ENCODE measurements at regions of chr21 and their contacts with region 1.

Region 1: GRCh38 chr21:42280356-42281180 is 34.6 kb downstream of the TFF3 start:
- DNase-seq: no peak
- ATAC-seq: no peak
- H3K4me3 ChIP-seq: no peak overlapping the region
- H3K27ac ChIP-seq: no peak overlapping the region
- H3K4me1 ChIP-seq: peaks cover 2% of the 10 kb centered on the region
- H3K27me3 ChIP-seq: no peaks in the 10 kb centered on the region
- CTCF ChIP-seq: no peak
- EP300 ChIP-seq: no peak
- POLR2A ChIP-seq: no peak
- RAD21 ChIP-seq: no peak

Region 2: DNA sequence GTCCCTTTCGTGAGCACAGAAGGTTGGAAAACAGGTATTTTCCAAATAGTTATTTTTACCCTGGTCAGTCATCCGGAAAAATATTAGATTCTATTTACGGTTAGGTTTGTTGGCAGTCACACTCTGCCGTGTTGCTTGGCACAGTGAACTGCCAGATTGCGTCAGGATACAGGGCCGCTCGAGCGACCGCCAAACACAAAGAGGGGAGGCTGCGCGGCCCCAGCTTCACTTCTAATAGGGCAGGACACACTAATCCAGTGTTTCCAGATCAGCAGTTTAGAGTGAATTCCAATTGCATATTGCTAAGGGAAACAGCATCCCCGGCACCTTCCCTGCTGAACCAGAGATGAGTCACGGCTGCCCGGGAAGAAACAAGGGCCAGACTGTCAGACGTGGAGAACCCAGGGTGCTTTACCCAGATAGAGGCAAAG is 186.6 kb before region 1 on chr21:
- CTCF ChIA-PET with region 1: no interaction called
- POLR2A ChIA-PET with region 1: no interaction called
- RAD21 ChIA-PET with region 1: no interaction called
- SMC1A ChIA-PET with region 1: no interaction called
- in situ Hi-C with region 1: no loop called
- intact Hi-C with region 1: no loop called
- DNase-seq: no peak
- ATAC-seq: no peak
- H3K4me3 ChIP-seq: no peak overlapping the region
- H3K27ac ChIP-seq: no peak overlapping the region
- H3K4me1 ChIP-seq: no peaks in the 10 kb centered on the region
- H3K27me3 ChIP-seq: no peaks in the 10 kb centered on the region; a peak in 2 of 4 replicates
- CTCF ChIP-seq: no peak
- EP300 ChIP-seq: no peak
- POLR2A ChIP-seq: no peak
- RAD21 ChIP-seq: no peak

Region 3: DNA sequence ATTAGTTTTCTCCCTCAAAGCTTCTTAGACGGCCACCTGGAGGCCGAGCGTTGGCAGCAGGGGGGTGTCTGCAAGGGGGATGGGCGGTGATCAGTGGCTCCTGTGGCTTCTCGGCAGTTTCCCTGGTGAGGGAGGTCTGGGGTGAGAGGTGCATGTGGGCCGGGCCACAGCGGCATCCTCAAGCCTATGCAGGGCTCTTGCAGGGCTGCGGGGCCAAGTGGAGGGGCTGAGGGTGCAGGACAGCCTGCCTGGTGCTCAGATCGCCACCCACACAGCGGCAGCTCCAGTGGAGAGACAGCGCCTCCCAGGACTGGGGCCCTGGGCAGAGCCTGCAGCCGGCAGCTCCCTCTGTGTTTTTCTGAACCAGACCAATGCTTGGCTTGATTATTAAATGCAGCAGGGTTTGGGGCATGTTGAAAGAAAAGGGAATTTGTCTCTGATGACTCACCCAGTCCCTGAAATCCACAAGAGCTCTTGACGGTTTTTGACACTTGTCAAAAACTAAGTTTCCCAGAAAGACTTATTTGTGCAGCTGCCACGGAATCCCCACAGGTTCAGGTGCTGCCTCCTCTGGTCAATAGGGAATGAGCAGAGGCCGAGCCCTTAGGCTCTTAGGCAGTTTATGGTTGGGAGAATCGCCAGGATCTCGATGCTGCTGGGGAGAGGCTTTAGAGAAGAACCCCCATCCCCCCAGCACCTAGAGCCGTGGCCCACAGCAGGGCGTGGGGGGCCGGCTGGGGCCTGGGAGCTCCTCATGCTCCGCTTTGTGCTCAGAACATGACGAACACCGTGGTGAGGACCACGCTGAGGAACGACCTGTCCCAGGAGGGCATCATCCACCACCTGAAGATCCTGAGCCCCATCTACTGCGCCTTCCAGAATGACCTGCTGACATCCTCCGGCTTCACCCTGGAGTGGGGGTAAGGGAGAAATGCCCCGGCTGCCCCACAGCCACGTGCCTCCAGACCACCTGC is 154.7 kb before region 1 on chr21:
- CTCF ChIA-PET with region 1: no interaction called
- POLR2A ChIA-PET with region 1: no interaction called
- RAD21 ChIA-PET with region 1: no interaction called
- SMC1A ChIA-PET with region 1: no interaction called
- in situ Hi-C with region 1: no loop called
- intact Hi-C with region 1: no loop called
- DNase-seq: no peak
- ATAC-seq: peak; percentile 45
- H3K4me3 ChIP-seq: no peak overlapping the region
- H3K27ac ChIP-seq: no peak overlapping the region
- H3K4me1 ChIP-seq: peaks cover 15% of the 10 kb centered on the region
- H3K27me3 ChIP-seq: no peaks in the 10 kb centered on the region
- CTCF ChIP-seq: no peak
- EP300 ChIP-seq: no peak
- POLR2A ChIP-seq: no peak
- RAD21 ChIP-seq: no peak

Region 4: GRCh38 chr21:42263591-42264131 is 16.9 kb before region 1 on chr21:
- CTCF ChIA-PET with region 1: interaction called, 25 read pairs
- POLR2A ChIA-PET with region 1: interaction called, 4 read pairs
- RAD21 ChIA-PET with region 1: interaction called, 25 read pairs
- SMC1A ChIA-PET with region 1: interaction called, 21 read pairs
- in situ Hi-C with region 1: no loop called
- intact Hi-C with region 1: loop called (anchors 2 kb)
- DNase-seq: no peak
- ATAC-seq: no peak
- H3K4me3 ChIP-seq: no peak overlapping the region
- H3K27ac ChIP-seq: no peak overlapping the region
- H3K4me1 ChIP-seq: no peaks in the 10 kb centered on the region
- H3K27me3 ChIP-seq: no peaks in the 10 kb centered on the region; a peak in 1 of 4 replicates
- CTCF ChIP-seq: no peak
- EP300 ChIP-seq: no peak
- POLR2A ChIP-seq: no peak
- RAD21 ChIP-seq: no peak

Region 5: DNA sequence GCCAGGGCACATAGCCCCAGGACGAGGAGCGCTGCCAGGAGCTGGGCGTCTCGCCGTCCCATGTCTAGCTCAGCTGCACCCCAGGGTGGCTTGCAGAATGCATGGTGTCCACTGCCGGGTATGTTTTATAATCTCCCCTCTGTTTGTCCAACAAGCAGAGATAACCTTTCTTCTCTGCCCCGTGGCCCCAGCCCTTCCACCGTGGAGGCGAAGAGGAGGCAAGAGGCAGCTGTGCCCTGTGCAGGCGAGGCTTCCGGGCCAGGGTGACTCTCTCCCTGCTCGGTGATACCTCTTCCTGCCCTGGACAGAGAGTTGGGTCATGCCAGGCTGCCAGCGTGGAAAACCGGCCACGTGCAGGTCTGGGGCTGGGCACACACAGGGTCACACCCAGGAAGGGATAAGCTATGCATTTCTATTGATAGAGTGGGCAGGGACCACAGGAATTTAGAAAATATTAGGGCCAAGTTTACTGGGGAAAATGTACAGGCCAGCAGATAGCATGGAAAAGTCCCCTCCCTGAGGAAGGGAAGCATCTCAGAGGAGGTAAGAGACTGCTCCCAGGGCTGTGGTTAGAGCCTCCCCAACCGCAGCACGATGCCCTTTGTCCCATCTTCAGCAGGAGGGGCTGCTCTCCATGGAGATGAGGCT is 70.5 kb after region 1 on chr21 and contains the start of gene TFF2:
- CTCF ChIA-PET with region 1: no interaction called
- POLR2A ChIA-PET with region 1: no interaction called
- RAD21 ChIA-PET with region 1: no interaction called
- SMC1A ChIA-PET with region 1: no interaction called
- in situ Hi-C with region 1: no loop called
- intact Hi-C with region 1: no loop called
- DNase-seq: no peak
- ATAC-seq: no peak
- H3K4me3 ChIP-seq: no peak within 1 kb of the TSS
- H3K27ac ChIP-seq: no peak within 1 kb of the TSS
- H3K4me1 ChIP-seq: no peaks in the 10 kb centered on the region
- H3K27me3 ChIP-seq: no peaks in the 10 kb centered on the region
- CTCF ChIP-seq: no peak
- EP300 ChIP-seq: no peak
- POLR2A ChIP-seq: no peak
- RAD21 ChIP-seq: no peak
- polyA plus RNA-seq, gene TFF2: not detected

Region 6: DNA sequence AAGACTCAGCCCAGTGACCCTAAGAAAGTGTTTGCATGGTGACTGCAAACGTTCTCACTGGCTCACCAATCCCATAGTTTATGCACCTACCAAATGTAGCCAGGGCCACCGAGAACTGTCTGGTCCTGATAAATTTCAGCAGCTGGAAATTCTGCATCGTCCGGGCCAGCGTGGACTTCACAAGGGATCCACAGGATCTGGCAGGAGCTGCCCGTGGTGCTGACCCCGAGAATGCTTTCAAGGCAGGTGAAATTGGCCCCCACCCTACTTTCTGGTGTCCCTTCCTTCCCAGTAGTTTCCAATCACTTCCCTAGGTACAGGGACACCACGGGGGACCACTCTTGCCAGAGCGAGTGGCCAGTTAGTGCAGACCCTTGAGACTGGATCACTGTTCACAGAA is 149.3 kb after region 1 on chr21:
- CTCF ChIA-PET with region 1: no interaction called
- POLR2A ChIA-PET with region 1: no interaction called
- RAD21 ChIA-PET with region 1: no interaction called
- SMC1A ChIA-PET with region 1: no interaction called
- in situ Hi-C with region 1: no loop called
- intact Hi-C with region 1: no loop called
- DNase-seq: no peak
- ATAC-seq: no peak
- H3K4me3 ChIP-seq: no peak overlapping the region
- H3K27ac ChIP-seq: no peak overlapping the region
- H3K4me1 ChIP-seq: peaks cover 22% of the 10 kb centered on the region
- H3K27me3 ChIP-seq: no peaks in the 10 kb centered on the region
- CTCF ChIP-seq: no peak
- EP300 ChIP-seq: no peak
- POLR2A ChIP-seq: no peak
- RAD21 ChIP-seq: no peak